ENCODE measurements at regions of chr1 and their contacts with region 1.

Region 1: DNA sequence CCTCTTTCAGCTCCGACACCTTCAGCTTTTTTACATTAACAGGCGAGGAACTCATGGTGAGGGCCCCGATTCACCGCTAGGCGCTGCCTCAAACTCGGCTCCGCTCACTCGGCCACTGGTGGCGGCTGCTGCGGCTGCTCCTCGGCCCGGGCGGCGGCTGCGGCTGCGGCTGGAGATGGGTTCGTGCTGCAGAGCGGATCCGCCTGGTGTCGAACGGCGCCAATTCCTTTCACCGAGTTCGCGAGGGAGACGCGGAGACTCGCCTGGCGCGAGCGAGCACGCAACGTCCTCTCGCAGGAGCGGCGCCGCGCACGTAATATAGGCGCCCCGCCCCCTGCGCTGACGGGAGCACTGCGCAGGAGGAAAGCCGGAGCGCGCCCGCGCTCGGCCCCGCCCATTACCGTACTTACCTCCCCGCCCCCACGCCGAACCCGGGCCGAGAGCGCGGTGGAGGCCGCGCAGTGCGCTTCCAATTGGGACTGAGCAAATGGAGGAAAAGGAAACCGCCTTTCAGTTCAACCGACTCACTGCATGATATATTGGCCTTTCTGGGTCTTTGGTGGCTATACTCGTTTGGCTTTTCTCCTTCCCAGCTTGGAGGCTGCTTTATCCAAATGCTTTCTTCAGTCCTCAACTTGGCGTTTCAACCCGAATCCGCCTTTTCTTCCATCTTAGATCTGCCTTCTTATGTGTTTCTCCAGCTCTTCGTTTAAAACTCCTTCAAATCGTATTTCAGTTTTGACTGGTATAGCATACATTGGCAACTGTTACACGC is at the start of gene HNRNPU:
- DNase-seq: peak; percentile 81
- ATAC-seq: peak; percentile 80
- H3K4me3 ChIP-seq: peak within 1 kb of the TSS; percentile 100
- H3K27ac ChIP-seq: peak within 1 kb of the TSS; percentile 99
- H3K4me1 ChIP-seq: peaks cover 3% of the 10 kb centered on the region; the same call in 1 of the 2 replicates
- H3K27me3 ChIP-seq: no peaks in the 10 kb centered on the region
- CTCF ChIP-seq: peak; percentile 9 to 30 (median 16); a peak in 3 of 6 replicates
- EP300 ChIP-seq: no peak
- POLR2A ChIP-seq: peak; percentile 99
- RAD21 ChIP-seq: no peak
- polyA plus RNA-seq, gene HNRNPU: 163 to 201 TPM

Region 2: DNA sequence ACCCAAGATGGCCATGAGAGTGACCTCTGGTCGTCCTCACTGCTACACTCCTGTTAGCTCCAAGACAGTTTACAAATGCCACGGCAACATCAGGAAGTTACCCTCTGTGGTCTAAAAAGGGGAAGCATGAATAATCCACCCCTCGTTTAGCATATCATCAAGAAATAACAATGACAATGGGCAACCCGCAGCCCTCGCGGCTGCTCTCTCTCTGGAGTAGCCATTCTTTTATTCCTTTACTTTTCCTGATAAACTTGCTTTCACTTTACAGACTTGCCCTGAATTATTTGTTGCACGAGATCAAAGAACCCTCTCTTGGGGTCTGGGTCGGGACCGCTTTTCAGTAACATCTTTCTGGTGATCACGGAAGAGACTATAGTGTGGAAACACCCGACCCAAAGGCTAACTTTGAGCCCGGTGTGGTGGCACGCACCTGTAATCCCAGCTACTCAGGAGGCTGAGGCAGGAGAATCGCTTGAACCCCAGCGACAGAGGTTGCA is 48.8 kb before region 1 on chr1:
- CTCF ChIA-PET with region 1: interaction called, 3 read pairs
- POLR2A ChIA-PET with region 1: interaction called, 5 read pairs
- RAD21 ChIA-PET with region 1: interaction called, 4 read pairs
- SMC1A ChIA-PET with region 1: interaction called, 9 read pairs
- in situ Hi-C with region 1: no loop called
- intact Hi-C with region 1: loop called (anchors 1 kb)
- DNase-seq: peak; percentile 30
- ATAC-seq: peak; percentile 70
- H3K4me3 ChIP-seq: peak overlapping the region; percentile 46; the same call in 1 of the 2 replicates
- H3K27ac ChIP-seq: peak overlapping the region; percentile 24; the same call in 1 of the 2 replicates
- H3K4me1 ChIP-seq: peaks cover 5% of the 10 kb centered on the region
- H3K27me3 ChIP-seq: no peaks in the 10 kb centered on the region
- CTCF ChIP-seq: no peak
- EP300 ChIP-seq: peak in 1 of 2 experiments; percentile 9; a peak in 1 of 4 replicates
- POLR2A ChIP-seq: no peak
- RAD21 ChIP-seq: no peak

Region 3: GRCh38 chr1:244849189-244849866 is 15.1 kb before region 1 on chr1:
- CTCF ChIA-PET with region 1: interaction called, 11 read pairs
- POLR2A ChIA-PET with region 1: interaction called, 350 read pairs
- RAD21 ChIA-PET with region 1: interaction called, 16 read pairs
- SMC1A ChIA-PET with region 1: interaction called, 360 read pairs
- in situ Hi-C with region 1: no loop called
- intact Hi-C with region 1: no loop called
- DNase-seq: no peak
- ATAC-seq: peak; percentile 5; the same call in 2 of the 3 replicates
- H3K4me3 ChIP-seq: no peak overlapping the region
- H3K27ac ChIP-seq: no peak overlapping the region
- H3K4me1 ChIP-seq: no peaks in the 10 kb centered on the region
- H3K27me3 ChIP-seq: no peaks in the 10 kb centered on the region
- CTCF ChIP-seq: no peak
- EP300 ChIP-seq: no peak
- POLR2A ChIP-seq: no peak; the same call in 1 of the 2 replicates
- RAD21 ChIP-seq: no peak

Region 4: GRCh38 chr1:244945109-244945671 is 80.8 kb after region 1 on chr1:
- CTCF ChIA-PET with region 1: interaction called, 11 read pairs
- POLR2A ChIA-PET with region 1: interaction called, 9 read pairs
- RAD21 ChIA-PET with region 1: interaction called, 9 read pairs
- SMC1A ChIA-PET with region 1: interaction called, 11 read pairs
- in situ Hi-C with region 1: no loop called
- intact Hi-C with region 1: no loop called
- DNase-seq: peak; percentile 85
- ATAC-seq: peak; percentile 74
- H3K4me3 ChIP-seq: peak overlapping the region; percentile 33
- H3K27ac ChIP-seq: peak overlapping the region; percentile 88
- H3K4me1 ChIP-seq: peaks cover 25% of the 10 kb centered on the region
- H3K27me3 ChIP-seq: no peaks in the 10 kb centered on the region
- CTCF ChIP-seq: no peak
- EP300 ChIP-seq: peak; percentile 54 to 73; a peak in 3 of 4 replicates
- POLR2A ChIP-seq: no peak
- RAD21 ChIP-seq: no peak

Region 5: GRCh38 chr1:244970661-244971551 is 106.5 kb after region 1 on chr1:
- CTCF ChIA-PET with region 1: interaction called, 6 read pairs
- POLR2A ChIA-PET with region 1: interaction called, 33 read pairs
- RAD21 ChIA-PET with region 1: interaction called, 12 read pairs
- SMC1A ChIA-PET with region 1: interaction called, 11 read pairs
- in situ Hi-C with region 1: loop called (anchors 5 kb)
- intact Hi-C with region 1: loop called (anchors 1 kb)
- DNase-seq: peak; percentile 74
- ATAC-seq: peak; percentile 84
- H3K4me3 ChIP-seq: peak overlapping the region; percentile 58
- H3K27ac ChIP-seq: peak overlapping the region; percentile 98
- H3K4me1 ChIP-seq: no peaks in the 10 kb centered on the region
- H3K27me3 ChIP-seq: no peaks in the 10 kb centered on the region
- CTCF ChIP-seq: peak; percentile 48 to 61 (median 53)
- EP300 ChIP-seq: no peak
- POLR2A ChIP-seq: peak; percentile 90
- RAD21 ChIP-seq: peak; percentile 24; the same call in 1 of the 2 replicates

Measured in GM12878 (cell line).